CD14-positive monocyte (primary cell): ENCODE measurements at regions of chr1 and their contacts with region 1.

Region 1: GRCh38 chr1:25042331-25043227 is 112.5 kb upstream of the RUNX3 start:
- DNase-seq: no peak
- H3K4me3 ChIP-seq: no peak overlapping the region
- H3K4me3 Mint-ChIP-seq: peak overlapping the region in 1 of 2 donors; percentile 7
- H3K27ac ChIP-seq: no peak overlapping the region
- H3K27ac Mint-ChIP-seq: peak overlapping the region in 1 of 7 donors; percentile 11
- H3K4me1 ChIP-seq: no peaks in the 10 kb centered on the region
- H3K4me1 Mint-ChIP-seq: peaks cover 4% of the 10 kb centered on the region
- H3K27me3 ChIP-seq: no peaks in the 10 kb centered on the region
- H3K27me3 Mint-ChIP-seq: peaks cover 4 to 14% (median 11%) of the 10 kb centered on the region in 3 donors
- CTCF ChIP-seq: no peak

Region 2: GRCh38 chr1:24941564-24941963 is 101.0 kb before region 1 on chr1:
- intact Hi-C with region 1: loop called in 1 of 2 experiments (anchors 5 kb)
- DNase-seq: no peak
- H3K4me3 ChIP-seq: no peak overlapping the region
- H3K4me3 Mint-ChIP-seq: no peak overlapping the region
- H3K27ac ChIP-seq: no peak overlapping the region
- H3K27ac Mint-ChIP-seq: peak overlapping the region in 1 of 7 donors; percentile 15
- H3K4me1 ChIP-seq: no peaks in the 10 kb centered on the region
- H3K4me1 Mint-ChIP-seq: peaks cover 6% of the 10 kb centered on the region
- H3K27me3 ChIP-seq: no peaks in the 10 kb centered on the region
- H3K27me3 Mint-ChIP-seq: peaks cover 5 to 7% (median 5%) of the 10 kb centered on the region in 3 donors
- CTCF ChIP-seq: no peak

Region 3: GRCh38 chr1:25006770-25007169 is 35.8 kb before region 1 on chr1:
- intact Hi-C with region 1: loop called in 1 of 2 experiments (anchors 5 kb)
- DNase-seq: peak; percentile 45 to 58 (median 50)
- H3K4me3 ChIP-seq: peak overlapping the region in 1 of 3 experiments; percentile 41
- H3K4me3 Mint-ChIP-seq: peak overlapping the region; percentile 59 to 86
- H3K27ac ChIP-seq: peak overlapping the region; percentile 60 to 76
- H3K27ac Mint-ChIP-seq: peak overlapping the region in 6 of 7 donors; percentile 6 to 94 (median 90)
- H3K4me1 ChIP-seq: peaks cover 47 to 54% of the 10 kb centered on the region in 2 donors
- H3K4me1 Mint-ChIP-seq: peaks cover 60% of the 10 kb centered on the region
- H3K27me3 ChIP-seq: no peaks in the 10 kb centered on the region
- H3K27me3 Mint-ChIP-seq: peaks cover 0 to 5% (median 4%) of the 10 kb centered on the region in 3 donors
- CTCF ChIP-seq: no peak